Activated CD4-positive, alpha-beta T cell treated with anti-CD3 and anti-CD28 coated beads, Interleukin-2, amount 10 ng/mL, durations not matched to agents 24 days and 14 days (primary cell): ENCODE measurements at regions of chr6 and their contacts with region 1.

Region 1: DNA sequence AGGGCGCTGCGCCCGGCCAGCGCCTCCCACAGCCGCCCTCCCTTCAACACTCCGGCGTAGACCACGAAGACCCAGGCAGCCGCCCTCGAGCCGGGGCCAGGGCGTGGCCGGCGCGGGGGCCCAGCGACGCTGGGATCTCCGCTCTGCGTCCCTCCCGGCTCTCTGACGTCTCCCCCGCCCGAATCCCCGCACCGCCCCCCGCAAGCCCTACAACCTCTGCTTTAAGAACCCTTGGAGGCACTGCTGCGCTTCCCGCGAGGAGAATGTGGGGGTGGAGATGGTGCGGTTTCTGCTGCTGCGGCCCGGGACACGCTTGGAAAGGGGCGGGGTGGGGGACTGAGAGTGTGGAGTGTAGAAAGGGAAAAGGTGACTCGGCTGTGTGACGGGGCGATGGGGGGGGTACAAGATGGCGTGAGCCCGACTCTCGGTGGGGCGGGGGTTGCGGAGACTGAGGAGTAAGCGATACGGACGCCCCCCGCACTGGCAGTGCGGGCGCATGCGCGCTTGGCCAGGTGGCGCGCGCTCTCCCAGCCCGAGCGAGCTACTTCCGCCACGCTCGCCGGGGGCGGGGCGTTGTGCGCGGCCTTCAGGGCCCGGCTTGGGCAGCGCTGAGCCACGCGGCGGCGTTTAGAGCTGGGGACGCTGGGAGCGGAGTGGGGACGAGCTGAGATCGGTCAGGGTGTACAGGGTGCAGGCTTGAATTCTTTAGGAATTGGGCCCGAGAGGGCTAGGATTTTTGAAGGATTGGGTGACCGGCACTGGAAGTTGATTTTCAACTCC is at the start of gene SUPT3H:
- DNase-seq: peak; percentile 97
- H3K4me3 Mint-ChIP-seq: peak within 1 kb of the TSS; percentile 99
- H3K27ac Mint-ChIP-seq: peak within 1 kb of the TSS; percentile 100
- H3K4me1 Mint-ChIP-seq: peaks cover 25% of the 10 kb centered on the region
- H3K27me3 Mint-ChIP-seq: no peaks in the 10 kb centered on the region
- total RNA-seq, gene SUPT3H: 12.4 and 13.0 TPM in 2 replicates

Region 2: DNA sequence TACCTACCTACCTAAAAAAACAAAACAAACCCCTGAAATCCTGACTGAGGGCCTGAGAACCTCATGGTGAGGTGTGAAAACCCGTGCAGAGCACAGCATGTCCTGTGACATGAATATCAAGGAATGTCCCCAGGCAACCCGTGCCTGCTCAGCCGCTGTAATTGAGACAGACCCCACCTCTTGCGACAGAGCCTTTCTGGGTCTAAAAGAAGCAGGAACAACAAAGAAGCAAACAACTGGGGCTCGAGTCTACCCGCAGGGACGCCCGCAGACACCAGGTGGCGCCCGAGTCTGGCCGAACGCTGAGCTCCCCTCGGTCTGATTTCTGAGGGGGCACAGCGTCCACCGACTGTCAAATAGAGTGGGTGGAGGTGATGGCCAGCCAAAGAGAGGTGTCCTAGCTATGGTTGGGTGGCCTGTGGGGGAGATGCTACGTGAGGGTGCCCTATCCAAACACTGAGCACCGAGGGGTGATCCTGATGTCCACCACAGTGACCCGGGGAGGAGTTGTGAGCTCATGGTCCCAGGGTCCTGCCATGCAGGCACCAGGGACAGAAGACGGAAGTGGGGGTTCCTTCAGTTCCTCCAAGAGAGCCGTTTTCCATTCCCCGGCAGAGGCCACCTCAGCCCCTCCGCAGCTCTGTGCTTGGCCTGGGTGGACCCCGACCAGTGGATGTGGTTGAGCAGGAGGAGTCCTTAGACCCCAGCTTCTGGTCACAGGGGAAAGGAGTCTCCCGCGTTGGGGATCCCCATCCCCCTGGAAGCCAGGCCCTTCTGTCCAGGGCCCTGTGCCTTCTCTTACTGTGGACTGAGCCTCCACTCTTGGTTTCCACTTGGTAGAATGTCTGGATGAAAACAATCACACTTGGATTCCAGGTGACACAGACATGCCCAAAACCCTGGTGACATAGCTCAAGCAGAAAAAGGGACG is 722.1 kb before region 1 on chr6:
- intact Hi-C with region 1: loop called (anchors 5 kb)
- DNase-seq: peak; percentile 92
- H3K4me3 Mint-ChIP-seq: peak overlapping the region; percentile 51
- H3K27ac Mint-ChIP-seq: peak overlapping the region; percentile 80
- H3K4me1 Mint-ChIP-seq: peaks cover 13% of the 10 kb centered on the region
- H3K27me3 Mint-ChIP-seq: peaks cover 2% of the 10 kb centered on the region

Region 3: DNA sequence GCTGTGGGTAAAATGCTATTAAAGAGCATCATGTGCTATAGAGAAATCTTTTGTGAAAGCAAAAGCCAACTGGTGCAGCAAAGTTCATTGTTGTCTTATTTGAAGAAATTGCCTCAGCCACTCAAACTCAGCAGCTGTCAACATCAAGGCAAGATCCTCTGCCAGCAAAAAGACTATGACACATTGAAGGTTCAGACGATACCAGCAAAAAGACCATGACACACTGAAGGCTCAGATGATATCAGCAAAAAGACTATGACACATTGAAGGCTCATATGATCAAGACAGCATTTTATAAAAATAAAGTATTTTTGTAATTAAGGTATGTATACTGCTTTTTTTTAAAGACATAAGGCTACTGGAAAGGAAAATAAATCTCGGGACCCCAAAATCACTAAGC is 168.0 kb before region 1 on chr6:
- intact Hi-C with region 1: loop called (anchors 2 kb)
- DNase-seq: no peak
- H3K4me3 Mint-ChIP-seq: no peak overlapping the region
- H3K27ac Mint-ChIP-seq: no peak overlapping the region
- H3K4me1 Mint-ChIP-seq: peaks cover 28% of the 10 kb centered on the region
- H3K27me3 Mint-ChIP-seq: no peaks in the 10 kb centered on the region

Region 4: DNA sequence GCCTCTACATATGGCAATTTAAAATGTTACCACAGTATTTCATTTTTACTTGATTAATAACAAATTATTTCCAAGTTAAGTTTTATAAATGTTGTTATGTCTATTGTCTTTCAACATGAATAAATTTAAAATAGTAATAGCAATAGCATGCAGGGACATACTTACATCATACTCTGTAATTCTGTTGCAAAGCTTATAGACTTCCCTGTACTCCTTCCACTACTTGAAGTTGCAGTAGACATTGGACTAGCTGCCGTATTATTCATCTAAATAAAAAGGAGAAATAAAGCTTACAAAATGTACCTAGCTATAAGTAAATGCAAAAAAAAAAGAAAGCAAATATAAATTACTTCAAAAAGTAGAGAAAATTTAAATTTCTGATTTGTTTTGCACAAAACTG is 12.7 kb before region 1 on chr6:
- intact Hi-C with region 1: no loop called
- DNase-seq: no peak
- H3K4me3 Mint-ChIP-seq: no peak overlapping the region
- H3K27ac Mint-ChIP-seq: no peak overlapping the region
- H3K4me1 Mint-ChIP-seq: peaks cover 7% of the 10 kb centered on the region
- H3K27me3 Mint-ChIP-seq: no peaks in the 10 kb centered on the region

Region 5: DNA sequence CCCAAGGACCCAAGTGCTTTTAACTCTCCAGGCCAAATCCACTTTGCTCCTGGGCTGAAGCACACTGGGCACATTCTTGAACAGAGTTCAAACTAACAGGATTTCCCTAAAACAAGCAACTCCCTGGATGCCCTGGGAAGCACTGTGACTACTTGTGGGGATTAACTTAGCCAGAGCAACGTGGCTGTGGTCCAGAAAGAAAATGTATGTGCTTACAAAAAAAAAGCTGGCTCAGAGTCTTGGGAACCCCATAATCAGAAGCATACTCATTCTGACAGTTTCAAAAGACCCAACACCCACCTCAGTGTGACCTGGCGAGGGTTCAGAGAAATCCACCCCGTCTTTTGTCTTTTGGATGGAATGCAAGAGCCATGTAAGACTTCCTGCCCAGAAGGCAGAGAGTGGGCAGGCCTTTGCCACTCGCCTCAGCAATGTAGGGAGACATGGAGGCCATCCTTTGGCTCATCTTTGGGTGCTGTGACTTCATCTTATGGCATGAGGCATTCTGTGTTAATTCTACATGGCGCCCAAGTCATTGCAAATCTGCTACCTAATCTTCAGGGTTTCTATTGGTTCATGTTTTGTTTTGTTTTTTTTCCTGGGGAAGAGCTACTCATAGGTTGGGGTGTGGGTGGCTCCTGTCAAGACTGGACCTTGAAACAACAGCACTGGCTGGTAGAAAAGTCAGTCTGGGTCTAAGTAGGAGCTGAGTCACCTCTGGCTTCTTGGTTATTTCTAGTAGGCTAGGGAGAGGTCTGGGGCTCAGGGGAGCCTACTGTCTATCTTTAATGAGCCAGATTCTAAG is 248.5 kb after region 1 on chr6:
- intact Hi-C with region 1: loop called (anchors 1 kb)
- DNase-seq: no peak
- H3K4me3 Mint-ChIP-seq: peak overlapping the region; percentile 3
- H3K27ac Mint-ChIP-seq: peak overlapping the region; percentile 82
- H3K4me1 Mint-ChIP-seq: peaks cover 39% of the 10 kb centered on the region
- H3K27me3 Mint-ChIP-seq: no peaks in the 10 kb centered on the region

Region 6: GRCh38 chr6:46011241-46012085 is 633.7 kb after region 1 on chr6:
- intact Hi-C with region 1: loop called (anchors 5 kb)
- DNase-seq: peak; percentile 91
- H3K4me3 Mint-ChIP-seq: peak overlapping the region; percentile 64
- H3K27ac Mint-ChIP-seq: peak overlapping the region; percentile 79
- H3K4me1 Mint-ChIP-seq: peaks cover 52% of the 10 kb centered on the region
- H3K27me3 Mint-ChIP-seq: peaks cover 9% of the 10 kb centered on the region